Activated naive CD4-positive, alpha-beta T cell treated with anti-CD3 and anti-CD28 coated beads, Interleukin-2, amount 10 ng/mL, durations not matched to agents 7 days and 5 days (primary cell): ENCODE measurements at regions of chr11 and their contacts with region 1.

Region 1: DNA sequence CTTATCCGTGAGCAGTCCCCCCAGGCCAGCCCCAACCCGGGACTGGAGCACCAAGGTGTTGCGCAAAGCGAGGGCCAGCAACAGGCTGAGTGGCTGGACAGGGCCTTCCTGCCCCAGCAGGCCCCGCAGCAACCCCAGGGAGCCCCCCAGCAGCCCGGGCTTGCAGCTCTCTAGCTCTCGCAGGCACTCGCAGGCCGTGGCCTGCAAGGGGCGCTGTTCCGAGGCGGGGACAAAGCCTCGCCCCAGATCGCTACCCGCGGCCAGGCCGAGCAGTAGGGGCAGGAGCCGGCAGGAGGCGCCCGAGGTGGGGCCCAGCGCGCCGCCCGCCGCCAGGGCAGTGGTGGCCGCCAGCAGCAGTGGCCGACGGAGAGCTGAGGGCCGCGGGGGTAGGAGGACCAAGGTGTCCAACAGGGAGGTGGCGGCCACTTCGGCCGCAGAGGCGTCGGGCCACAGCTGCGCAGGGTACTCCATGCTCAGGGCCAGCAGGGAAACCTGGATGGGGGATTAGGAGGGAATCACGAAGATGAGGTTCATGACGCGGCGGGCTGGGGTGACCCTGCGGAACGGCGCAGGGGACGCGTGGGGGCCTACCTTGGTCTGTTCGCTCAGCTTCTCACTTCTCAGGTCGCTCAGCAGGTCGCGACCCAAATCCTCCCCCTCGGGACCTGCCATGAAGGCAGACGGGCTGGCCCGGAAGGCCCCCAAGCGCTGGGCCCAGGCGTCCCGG is 762 bp downstream of the AP5B1 start:
- DNase-seq: peak; percentile 90
- H3K4me3 Mint-ChIP-seq: peak overlapping the region; percentile 89
- H3K27ac Mint-ChIP-seq: peak overlapping the region; percentile 85
- H3K4me1 Mint-ChIP-seq: peaks cover 20% of the 10 kb centered on the region
- H3K27me3 Mint-ChIP-seq: peaks cover 35% of the 10 kb centered on the region

Region 2: GRCh38 chr11:65700391-65700790 is 79.6 kb before region 1 on chr11:
- CTCF ChIA-PET with region 1: interaction called, 13 read pairs
- DNase-seq: no peak
- H3K4me3 Mint-ChIP-seq: no peak overlapping the region
- H3K27ac Mint-ChIP-seq: no peak overlapping the region
- H3K4me1 Mint-ChIP-seq: no peaks in the 10 kb centered on the region
- H3K27me3 Mint-ChIP-seq: peaks cover 50% of the 10 kb centered on the region

Region 3: DNA sequence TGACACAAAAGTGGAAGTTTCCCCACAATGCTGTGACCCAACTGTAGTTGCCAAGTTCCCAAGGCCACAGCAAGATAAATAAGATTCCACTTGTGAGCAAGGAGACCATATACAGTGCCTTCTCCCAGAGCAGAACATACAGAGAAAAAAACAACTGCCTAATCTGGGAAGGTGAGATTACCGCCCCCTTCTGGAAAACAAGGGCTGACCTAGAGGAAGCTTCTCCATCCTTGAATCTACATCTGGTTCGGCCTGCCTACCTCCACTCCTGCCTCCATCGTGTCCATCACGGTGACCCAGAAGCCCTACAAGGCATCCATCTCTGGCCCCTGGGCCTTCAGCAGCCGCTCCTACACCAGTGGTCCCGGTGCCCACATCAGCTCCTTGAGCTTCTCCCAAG is 53.4 kb before region 1 on chr11:
- CTCF ChIA-PET with region 1: interaction called, 11 read pairs
- DNase-seq: no peak
- H3K4me3 Mint-ChIP-seq: no peak overlapping the region
- H3K27ac Mint-ChIP-seq: no peak overlapping the region
- H3K4me1 Mint-ChIP-seq: peaks cover 4% of the 10 kb centered on the region
- H3K27me3 Mint-ChIP-seq: peaks cover 34% of the 10 kb centered on the region

Region 4: DNA sequence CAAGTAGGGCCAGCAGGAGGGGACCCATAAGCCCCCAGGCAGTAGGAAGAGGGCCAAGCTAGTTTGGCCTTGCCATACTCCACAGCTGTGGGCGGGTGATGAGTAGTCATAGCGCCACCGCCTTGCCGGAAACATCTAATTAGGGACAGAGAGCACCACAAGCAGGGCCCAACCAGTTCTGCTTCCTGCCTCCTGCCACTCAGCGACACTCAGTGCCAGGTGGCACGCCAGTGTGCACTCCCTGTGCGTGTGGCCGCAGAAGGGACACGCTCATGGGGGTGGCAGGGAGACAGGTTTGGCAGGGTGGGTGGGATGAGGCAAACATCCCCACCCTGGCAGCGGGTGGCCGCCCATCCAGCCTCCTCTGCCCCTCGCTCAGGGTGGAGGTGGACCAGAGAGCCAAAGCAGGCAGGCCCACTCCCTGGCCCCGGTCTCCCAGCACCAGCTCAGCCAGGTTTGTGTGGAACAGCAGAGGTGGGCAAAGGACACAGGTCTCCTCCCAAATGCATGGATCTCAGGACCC is 11.7 kb after region 1 on chr11:
- CTCF ChIA-PET with region 1: interaction called, 63 read pairs
- DNase-seq: peak; percentile 73
- H3K4me3 Mint-ChIP-seq: no peak overlapping the region
- H3K27ac Mint-ChIP-seq: peak overlapping the region; percentile 76
- H3K4me1 Mint-ChIP-seq: peaks cover 56% of the 10 kb centered on the region
- H3K27me3 Mint-ChIP-seq: peaks cover 99% of the 10 kb centered on the region

Region 5: DNA sequence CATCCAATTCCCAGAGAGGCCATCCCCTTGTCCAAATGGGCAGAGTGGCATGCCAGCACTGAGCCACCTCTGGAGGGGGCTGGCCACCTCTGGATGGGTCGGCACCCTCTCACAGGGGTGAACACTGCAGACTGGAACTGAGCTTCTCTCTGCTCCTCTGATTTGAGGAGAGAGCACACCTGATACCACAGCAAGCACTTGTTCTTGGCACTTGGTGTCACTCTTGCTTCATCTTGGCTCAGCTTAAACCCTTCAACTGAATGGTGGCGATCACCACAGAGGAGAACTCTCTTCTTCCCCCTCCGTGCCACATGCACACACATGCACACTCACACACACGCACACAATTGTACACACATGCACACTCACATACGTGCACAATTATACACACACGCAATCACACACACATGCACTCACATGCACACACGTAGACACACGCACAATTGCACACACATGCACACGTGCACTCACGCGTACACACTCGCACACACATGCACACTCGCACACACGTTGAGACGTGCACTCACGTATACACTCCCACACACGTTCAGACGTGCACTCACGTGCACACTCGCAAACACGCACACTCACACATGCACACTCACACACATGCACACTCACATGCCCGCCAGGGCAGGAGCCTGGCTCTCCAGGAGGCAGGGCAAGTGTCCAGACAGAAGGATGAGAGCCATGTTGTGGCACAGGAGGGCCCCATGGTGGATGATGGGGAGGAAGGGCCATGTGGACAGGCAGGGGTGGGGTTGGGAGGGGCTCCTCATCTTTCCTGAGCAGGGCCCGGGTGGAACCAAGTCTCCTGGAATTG is 30.2 kb after region 1 on chr11:
- CTCF ChIA-PET with region 1: interaction called, 128 read pairs
- DNase-seq: no peak
- H3K4me3 Mint-ChIP-seq: no peak overlapping the region
- H3K27ac Mint-ChIP-seq: no peak overlapping the region
- H3K4me1 Mint-ChIP-seq: peaks cover 12% of the 10 kb centered on the region
- H3K27me3 Mint-ChIP-seq: peaks cover 60% of the 10 kb centered on the region

Region 6: DNA sequence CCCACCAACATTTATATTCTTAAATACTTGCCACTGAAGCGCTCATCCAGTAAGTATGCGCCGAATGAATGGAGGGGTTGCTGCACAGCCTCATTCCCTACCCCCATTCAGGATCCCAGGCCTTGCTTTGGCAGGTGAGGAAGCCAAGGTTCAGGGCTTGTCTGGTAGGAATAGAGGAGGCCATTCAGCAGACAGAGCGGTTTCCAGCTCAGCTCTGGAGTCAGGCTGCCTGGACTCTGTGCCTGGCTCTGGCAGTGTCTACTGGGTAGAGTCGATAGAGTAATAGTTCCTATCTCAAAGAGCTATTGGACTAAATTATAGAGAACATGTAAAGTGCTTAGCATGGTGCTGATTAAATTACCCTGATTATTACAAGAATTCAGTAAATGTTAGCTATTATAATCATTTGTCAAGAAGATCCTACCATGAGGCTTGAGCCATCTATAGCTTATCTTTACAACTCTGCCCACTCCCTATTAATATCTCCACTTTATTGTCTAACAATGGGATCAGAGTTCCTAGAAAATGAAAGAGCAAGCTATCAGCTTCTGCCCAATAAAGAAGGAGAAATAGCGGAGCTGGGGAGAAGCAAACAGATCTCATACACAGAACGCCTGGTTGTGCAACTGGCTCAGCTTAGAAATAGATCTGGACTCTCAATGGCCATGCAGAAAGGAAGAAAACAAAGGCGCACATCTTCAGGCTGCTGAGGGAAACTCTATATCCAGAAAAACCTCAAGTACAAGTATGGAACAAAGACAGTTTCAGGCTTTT is 47.1 kb after region 1 on chr11:
- CTCF ChIA-PET with region 1: interaction called, 15 read pairs
- DNase-seq: no peak
- H3K4me3 Mint-ChIP-seq: no peak overlapping the region
- H3K27ac Mint-ChIP-seq: no peak overlapping the region
- H3K4me1 Mint-ChIP-seq: peaks cover 12% of the 10 kb centered on the region
- H3K27me3 Mint-ChIP-seq: peaks cover 20% of the 10 kb centered on the region

Region 7: GRCh38 chr11:65844231-65845190 is 64.5 kb after region 1 on chr11:
- CTCF ChIA-PET with region 1: no interaction called
- DNase-seq: no peak
- H3K4me3 Mint-ChIP-seq: no peak overlapping the region
- H3K27ac Mint-ChIP-seq: no peak overlapping the region
- H3K4me1 Mint-ChIP-seq: no peaks in the 10 kb centered on the region
- H3K27me3 Mint-ChIP-seq: peaks cover 13% of the 10 kb centered on the region